GM12878 (cell line): ENCODE measurements at regions of chr1 and their contacts with region 1.

Region 1: DNA sequence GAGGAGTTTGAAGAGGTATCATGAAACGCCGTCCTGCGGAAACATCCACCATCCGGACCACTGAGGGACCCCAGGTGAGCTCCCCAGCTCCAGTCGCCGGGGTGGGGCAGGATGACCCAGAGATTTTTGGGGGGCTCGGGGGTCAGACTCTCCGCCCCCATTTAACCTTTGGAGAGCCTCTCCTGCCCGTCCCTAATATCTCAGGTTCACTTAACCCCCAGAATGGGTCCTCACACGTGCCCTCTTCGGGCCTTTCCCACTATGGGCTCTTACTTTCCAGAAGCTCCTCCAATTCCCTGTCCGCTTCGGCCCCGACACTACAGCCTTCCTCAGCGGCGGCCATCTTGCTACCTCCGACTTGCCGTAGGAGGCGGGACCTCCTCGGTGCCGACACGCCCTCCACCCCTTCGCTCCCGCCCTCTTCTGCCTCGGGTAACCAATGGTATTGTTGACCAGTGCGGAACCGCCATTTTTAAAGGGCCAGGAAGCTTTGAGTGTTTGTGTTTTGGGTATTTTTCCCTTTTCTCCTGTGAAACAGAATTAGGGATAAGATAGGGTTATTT is at the start of gene PEX19:
- DNase-seq: peak; percentile 71
- ATAC-seq: peak; percentile 100
- H3K4me3 ChIP-seq: peak within 1 kb of the TSS; percentile 91
- H3K27ac ChIP-seq: peak within 1 kb of the TSS; percentile 68
- H3K4me1 ChIP-seq: no peaks in the 10 kb centered on the region
- H3K27me3 ChIP-seq: no peaks in the 10 kb centered on the region
- CTCF ChIP-seq: no peak
- EP300 ChIP-seq: no peak
- POLR2A ChIP-seq: peak; percentile 90
- RAD21 ChIP-seq: no peak
- polyA plus RNA-seq, gene PEX19: 29.4 to 50.8 TPM

Region 2: GRCh38 chr1:160261893-160262794 is 22.7 kb before region 1 on chr1 and contains the start of gene DCAF8:
- CTCF ChIA-PET with region 1: interaction called, 14 read pairs
- POLR2A ChIA-PET with region 1: interaction called, 29 read pairs
- RAD21 ChIA-PET with region 1: interaction called, 27 read pairs
- SMC1A ChIA-PET with region 1: interaction called, 21 read pairs
- in situ Hi-C with region 1: no loop called
- intact Hi-C with region 1: loop called (anchors 1 kb)
- DNase-seq: peak; percentile 94
- ATAC-seq: peak; percentile 89
- H3K4me3 ChIP-seq: peak within 1 kb of the TSS; percentile 82
- H3K27ac ChIP-seq: peak within 1 kb of the TSS; percentile 90
- H3K4me1 ChIP-seq: peaks cover 3% of the 10 kb centered on the region
- H3K27me3 ChIP-seq: no peaks in the 10 kb centered on the region
- CTCF ChIP-seq: no peak
- EP300 ChIP-seq: no peak
- POLR2A ChIP-seq: peak; percentile 98
- RAD21 ChIP-seq: no peak
- polyA plus RNA-seq, gene DCAF8: 10.4 to 18.7 TPM